Activated naive CD4-positive, alpha-beta T cell treated with anti-CD3 and anti-CD28 coated beads for 36 hours (primary cell): ENCODE measurements at regions of chr6 and their contacts with region 1.

Region 1: DNA sequence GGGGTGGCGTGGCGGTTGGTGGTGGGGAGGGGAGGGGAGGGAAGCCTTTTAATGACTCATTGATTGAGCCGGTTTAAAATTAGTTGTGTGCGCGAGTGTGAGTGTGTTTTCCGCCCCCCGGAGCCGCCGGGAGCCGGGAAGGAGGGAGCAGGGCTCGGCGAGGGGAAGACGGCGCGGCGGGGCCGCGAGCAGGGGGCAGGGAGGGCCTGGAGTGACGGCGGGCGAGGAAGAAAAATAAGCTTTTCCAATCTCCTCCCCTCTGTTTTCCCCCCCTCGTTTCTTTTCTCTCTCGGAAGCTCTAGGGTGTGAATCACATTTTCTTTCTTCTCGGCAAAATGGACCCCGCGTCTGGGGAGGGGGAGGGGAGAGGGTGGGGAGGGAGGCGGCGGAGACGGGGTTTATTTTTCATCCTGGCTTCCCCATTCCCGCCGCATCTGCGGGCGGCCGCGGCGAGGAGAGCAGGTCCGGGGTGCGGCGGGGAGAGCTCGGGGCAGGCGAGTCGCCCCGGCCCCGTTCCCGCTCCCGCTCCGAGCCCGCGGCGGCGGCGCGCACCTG is 847 bp downstream of the BICRAL start:
- DNase-seq: peak; percentile 75
- H3K4me3 Mint-ChIP-seq: peak overlapping the region; percentile 81
- H3K27ac Mint-ChIP-seq: peak overlapping the region; percentile 100
- H3K4me1 Mint-ChIP-seq: peaks cover 26% of the 10 kb centered on the region
- H3K27me3 Mint-ChIP-seq: no peaks in the 10 kb centered on the region

Region 2: DNA sequence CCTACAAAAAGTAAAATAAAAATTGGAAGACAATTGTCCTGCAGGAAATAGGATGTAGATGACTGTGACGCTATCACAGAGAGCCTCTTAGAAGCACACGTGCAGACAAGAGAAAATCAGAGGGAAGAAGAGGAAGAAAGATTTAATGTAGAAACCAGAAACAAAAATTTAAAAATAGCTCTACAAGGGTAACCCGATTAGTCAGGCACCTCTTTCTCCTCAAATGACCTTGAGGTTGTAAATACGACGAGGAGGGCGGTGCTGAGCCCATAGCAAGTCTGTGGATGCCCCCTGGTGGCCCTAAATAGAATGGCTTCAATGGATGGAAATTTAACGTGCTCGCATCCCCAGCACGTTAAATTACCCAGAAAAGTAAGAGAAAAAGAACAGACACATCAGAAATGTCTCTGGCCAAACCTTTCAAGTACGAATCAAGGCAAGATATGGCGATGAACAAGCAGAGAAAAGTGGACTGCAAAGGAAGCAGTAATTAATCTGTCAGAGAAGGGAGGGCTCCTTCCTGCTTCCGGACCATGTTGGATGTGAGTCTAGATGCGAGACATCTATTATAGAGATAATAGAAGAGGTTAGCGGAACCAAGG is 56.1 kb before region 1 on chr6:
- CTCF ChIA-PET with region 1: interaction called, 5 read pairs
- intact Hi-C with region 1: loop called (anchors 5 kb)
- DNase-seq: peak; percentile 84
- H3K4me3 Mint-ChIP-seq: peak overlapping the region; percentile 76
- H3K27ac Mint-ChIP-seq: peak overlapping the region; percentile 91
- H3K4me1 Mint-ChIP-seq: peaks cover 15% of the 10 kb centered on the region
- H3K27me3 Mint-ChIP-seq: no peaks in the 10 kb centered on the region

Region 3: GRCh38 chr6:42771741-42772100 is 11.0 kb before region 1 on chr6:
- CTCF ChIA-PET with region 1: interaction called, 4 read pairs
- intact Hi-C with region 1: loop called (anchors 1 kb)
- DNase-seq: no peak
- H3K4me3 Mint-ChIP-seq: peak overlapping the region; percentile 71
- H3K27ac Mint-ChIP-seq: peak overlapping the region; percentile 96
- H3K4me1 Mint-ChIP-seq: peaks cover 62% of the 10 kb centered on the region
- H3K27me3 Mint-ChIP-seq: no peaks in the 10 kb centered on the region

Region 4: DNA sequence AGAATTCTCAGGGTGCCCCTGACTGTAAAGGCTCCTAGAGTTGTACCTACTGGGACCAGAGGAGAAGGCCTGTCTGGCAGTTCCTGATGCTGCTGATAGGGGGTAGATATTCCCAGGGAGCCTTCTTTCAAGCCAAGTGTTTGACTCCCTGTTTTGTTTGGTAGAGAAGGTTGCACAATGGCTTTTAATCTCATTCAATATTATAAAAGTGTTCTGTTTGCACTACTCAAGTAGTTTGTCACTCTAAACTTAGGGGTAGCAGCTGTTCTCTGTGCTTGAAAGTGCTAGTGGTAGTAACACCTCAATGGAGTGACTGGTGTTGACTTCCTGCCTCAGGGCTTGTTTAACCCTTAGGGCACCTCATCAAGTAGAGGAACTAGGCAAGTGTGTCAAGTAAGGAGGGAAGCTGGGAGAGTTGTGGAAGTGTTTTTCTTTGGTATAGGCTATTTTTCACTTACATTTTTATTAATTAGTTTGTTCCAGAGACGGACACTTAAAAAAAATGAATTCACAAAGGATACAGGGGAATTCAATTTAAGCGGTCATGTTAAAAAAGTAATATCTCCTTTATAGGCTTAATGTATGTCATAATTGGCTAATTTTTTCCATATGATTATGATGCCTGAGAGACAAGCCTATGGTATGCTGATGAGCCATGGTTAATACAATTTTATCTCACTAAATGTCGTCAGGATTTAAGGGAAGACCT is 37.3 kb after region 1 on chr6:
- CTCF ChIA-PET with region 1: no interaction called
- intact Hi-C with region 1: loop called (anchors 5 kb)
- DNase-seq: peak; percentile 29
- H3K4me3 Mint-ChIP-seq: no peak overlapping the region
- H3K27ac Mint-ChIP-seq: peak overlapping the region; percentile 31
- H3K4me1 Mint-ChIP-seq: peaks cover 23% of the 10 kb centered on the region
- H3K27me3 Mint-ChIP-seq: no peaks in the 10 kb centered on the region